GM10248 (cell line): ENCODE measurements at regions of chr4 and their contacts with region 1.

Region 1: GRCh38 chr4:17964576-17964975 is 57.0 kb downstream of the LCORL start:
- DNase-seq: no peak
- CTCF ChIP-seq: no peak

Region 2: DNA sequence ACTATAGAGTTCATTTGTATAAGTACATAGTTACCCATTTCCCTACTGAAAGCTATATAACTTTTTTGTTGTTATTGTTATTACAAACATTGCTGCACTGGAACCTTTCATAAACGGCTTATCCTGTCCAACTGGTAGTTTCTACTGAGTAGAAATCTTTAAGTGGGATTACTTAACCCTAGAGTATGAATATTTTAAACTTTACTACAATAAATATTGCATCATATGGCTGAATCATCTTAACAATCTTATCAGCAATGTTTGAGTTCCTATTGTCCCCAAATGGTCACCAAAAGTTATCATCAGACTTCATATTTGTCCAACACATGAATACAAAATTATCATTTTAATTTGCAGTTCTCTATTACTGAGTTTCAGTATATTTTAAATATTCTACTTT is 16.5 kb after region 1 on chr4:
- CTCF ChIA-PET with region 1: interaction called, 15 read pairs
- POLR2A ChIA-PET with region 1: no interaction called
- DNase-seq: no peak
- CTCF ChIP-seq: no peak